Posterior vena cava (tissue), 2 donors: ENCODE measurements at regions of chr1 and their contacts with region 1.

Region 1: GRCh38 chr1:58739856-58740466 is 40.1 kb upstream of the MYSM1 start:
- DNase-seq: no peak

Region 2: GRCh38 chr1:59743324-59744091 is 1003.5 kb after region 1 on chr1:
- intact Hi-C with region 1: loop called in 1 of 2 experiments (anchors 10 kb)
- DNase-seq: no peak

Region 3: DNA sequence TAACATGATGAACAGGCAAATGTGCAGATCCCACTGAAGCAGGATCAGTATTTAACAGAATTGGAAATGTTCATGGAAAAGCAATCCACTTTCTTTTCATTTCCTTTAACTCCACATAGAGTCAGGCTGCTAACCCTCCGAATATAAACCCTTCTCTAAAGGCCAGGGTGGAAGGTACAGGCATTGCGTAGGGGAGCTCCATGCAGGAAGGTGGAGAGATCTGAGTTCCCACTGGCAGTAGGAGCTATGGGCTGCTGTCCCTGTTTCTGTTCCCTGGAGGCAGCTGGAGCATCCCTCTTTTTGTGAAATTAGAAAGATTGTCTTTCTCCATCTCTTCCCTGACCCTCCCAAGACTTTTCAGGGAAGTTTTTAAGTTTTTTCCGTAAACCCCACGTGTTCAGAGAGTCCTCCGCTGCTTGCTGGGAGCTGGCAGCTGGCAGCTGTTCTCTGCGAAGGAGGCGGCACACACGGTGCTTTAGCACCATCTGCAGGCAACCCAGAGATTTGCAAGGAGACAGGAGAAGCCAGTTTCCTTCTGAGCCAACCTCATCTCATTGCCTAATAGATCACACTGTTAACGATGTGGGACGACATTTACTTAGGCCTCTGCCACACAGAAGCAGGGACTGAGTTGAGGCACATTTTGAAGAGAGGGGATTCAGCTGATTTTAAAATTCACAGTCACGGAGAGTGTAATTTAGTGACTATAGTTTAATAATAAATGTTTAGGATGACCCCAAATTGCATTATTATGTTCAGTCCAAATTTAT is 1019.4 kb after region 1 on chr1:
- intact Hi-C with region 1: loop called in 1 of 2 experiments (anchors 5 kb)
- DNase-seq: peak; percentile 94